BJ (cell line): ENCODE measurements at regions of chr15 and their contacts with region 1.

Region 1: GRCh38 chr15:73633111-73633990 is at the start of gene NPTN:
- DNase-seq: peak; percentile 86
- H3K4me3 ChIP-seq: peak within 1 kb of the TSS; percentile 94
- H3K27me3 ChIP-seq: no peaks in the 10 kb centered on the region
- CTCF ChIP-seq: no peak
- polyA plus RNA-seq, gene NPTN: 308 and 406 TPM in 2 replicates

Region 2: GRCh38 chr15:73560501-73561117 is 72.7 kb before region 1 on chr15:
- CTCF ChIA-PET with region 1: interaction called, 130 read pairs
- POLR2A ChIA-PET with region 1: interaction called, 4 read pairs
- DNase-seq: no peak
- H3K4me3 ChIP-seq: no peak overlapping the region
- H3K27me3 ChIP-seq: no peaks in the 10 kb centered on the region
- CTCF ChIP-seq: peak; percentile 50

Region 3: GRCh38 chr15:73650416-73651126 is 17.2 kb after region 1 on chr15:
- CTCF ChIA-PET with region 1: interaction called, 16 read pairs
- POLR2A ChIA-PET with region 1: no interaction called
- DNase-seq: peak; percentile 28
- H3K4me3 ChIP-seq: no peak overlapping the region
- H3K27me3 ChIP-seq: no peaks in the 10 kb centered on the region
- CTCF ChIP-seq: no peak

Region 4: GRCh38 chr15:73677146-73677607 is 43.8 kb after region 1 on chr15:
- CTCF ChIA-PET with region 1: interaction called, 33 read pairs
- POLR2A ChIA-PET with region 1: no interaction called
- DNase-seq: no peak
- H3K4me3 ChIP-seq: no peak overlapping the region
- H3K27me3 ChIP-seq: peaks cover 11% of the 10 kb centered on the region
- CTCF ChIP-seq: peak; percentile 87

Region 5: DNA sequence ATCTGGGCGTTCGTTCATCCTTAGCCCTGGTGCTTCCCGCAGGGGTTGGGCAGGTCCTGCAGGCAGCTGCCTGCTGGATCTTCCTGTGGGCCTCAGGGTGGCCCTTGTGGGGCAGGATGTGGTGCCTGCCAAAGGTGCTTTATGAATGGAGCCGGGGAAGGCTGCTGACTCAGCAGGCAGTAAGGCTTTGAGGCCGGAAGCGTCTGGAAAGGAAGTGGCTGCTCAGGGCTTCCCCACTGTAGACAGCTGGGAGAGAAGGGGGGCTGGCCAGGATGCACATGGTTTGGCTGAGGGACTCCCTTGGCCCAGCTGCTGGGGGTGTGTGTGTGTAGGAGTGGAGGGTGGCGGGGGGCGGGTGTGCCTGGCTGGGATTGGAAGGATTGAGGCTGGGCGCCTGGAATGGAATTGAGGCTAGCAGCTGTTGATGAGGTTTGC is 63.7 kb after region 1 on chr15:
- CTCF ChIA-PET with region 1: interaction called, 151 read pairs
- POLR2A ChIA-PET with region 1: no interaction called
- DNase-seq: no peak
- H3K4me3 ChIP-seq: no peak overlapping the region
- H3K27me3 ChIP-seq: no peaks in the 10 kb centered on the region
- CTCF ChIP-seq: no peak